Activated CD4-positive, alpha-beta memory T cell treated with anti-CD3 and anti-CD28 coated beads for 36 hours (primary cell): ENCODE measurements at regions of chr18 and their contacts with region 1.

Region 1: GRCh38 chr18:1846640-1847039 is 724.7 kb downstream of the METTL4 start:
- DNase-seq: no peak
- H3K4me3 Mint-ChIP-seq: no peak overlapping the region
- H3K27ac Mint-ChIP-seq: no peak overlapping the region
- H3K4me1 Mint-ChIP-seq: no peaks in the 10 kb centered on the region
- H3K27me3 Mint-ChIP-seq: no peaks in the 10 kb centered on the region

Region 2: GRCh38 chr18:1710114-1710513 is 136.5 kb before region 1 on chr18:
- CTCF ChIA-PET with region 1: no interaction called
- POLR2A ChIA-PET with region 1: no interaction called
- intact Hi-C with region 1: loop called (anchors 5 kb)
- DNase-seq: no peak
- H3K4me3 Mint-ChIP-seq: no peak overlapping the region
- H3K27ac Mint-ChIP-seq: no peak overlapping the region
- H3K4me1 Mint-ChIP-seq: no peaks in the 10 kb centered on the region
- H3K27me3 Mint-ChIP-seq: no peaks in the 10 kb centered on the region